AG04450 (cell line): ENCODE measurements at regions of chr17 and their contacts with region 1.

Region 1: DNA sequence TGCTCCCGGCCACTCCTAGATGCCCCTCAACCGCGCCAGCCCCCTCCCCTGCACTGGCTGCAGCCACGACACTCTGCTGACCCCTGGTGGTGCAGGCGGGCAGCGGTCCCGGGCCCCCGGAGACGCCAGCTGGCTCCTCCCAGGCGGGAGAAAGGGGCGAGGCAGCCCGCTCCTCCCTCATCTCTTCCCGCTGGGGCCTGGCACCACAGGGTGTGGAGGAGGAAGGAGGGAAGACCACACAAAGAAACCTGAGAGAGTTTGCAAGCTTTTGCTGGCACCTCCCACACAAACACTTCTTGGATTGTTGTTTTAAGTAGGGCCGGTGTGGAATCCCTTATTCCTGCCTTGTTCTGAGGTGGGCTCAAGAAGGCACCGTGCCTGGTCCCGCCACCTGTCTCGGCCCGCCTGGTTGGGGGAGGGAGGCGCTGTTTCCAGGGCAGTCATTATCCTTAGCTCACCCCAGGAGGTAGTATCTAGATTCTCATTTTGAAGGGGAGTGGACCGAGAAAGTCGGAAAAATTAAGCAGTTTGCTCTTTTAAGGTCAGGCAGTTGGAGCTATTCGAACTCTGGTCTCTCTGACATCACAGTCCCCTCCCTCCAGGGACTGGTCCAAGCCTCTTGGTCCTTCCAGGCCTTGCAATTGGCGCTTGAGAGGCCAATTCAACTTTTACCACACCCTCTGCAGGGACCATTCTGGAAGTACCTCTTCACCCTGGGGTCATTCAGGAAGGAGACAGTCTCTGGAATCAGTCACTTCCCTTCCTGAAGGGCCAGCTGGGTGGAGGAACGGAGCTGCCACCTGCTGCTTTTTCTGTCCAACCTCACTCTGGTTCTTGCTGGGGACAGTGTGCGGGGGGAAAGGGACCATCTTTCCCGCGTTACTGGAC is 951 bp upstream of the ANKRD13B start:
- DNase-seq: no peak
- H3K4me3 ChIP-seq: peak overlapping the region; percentile 44
- H3K27ac ChIP-seq: peak overlapping the region; percentile 65
- H3K27me3 ChIP-seq: no peaks in the 10 kb centered on the region
- CTCF ChIP-seq: peak; percentile 98

Region 2: GRCh38 chr17:29579866-29580771 is 11.9 kb before region 1 on chr17:
- CTCF ChIA-PET with region 1: interaction called, 23 read pairs
- POLR2A ChIA-PET with region 1: interaction called, 3 read pairs
- DNase-seq: no peak
- H3K4me3 ChIP-seq: no peak overlapping the region
- H3K27ac ChIP-seq: no peak overlapping the region
- H3K27me3 ChIP-seq: no peaks in the 10 kb centered on the region
- CTCF ChIP-seq: peak; percentile 79

Region 3: DNA sequence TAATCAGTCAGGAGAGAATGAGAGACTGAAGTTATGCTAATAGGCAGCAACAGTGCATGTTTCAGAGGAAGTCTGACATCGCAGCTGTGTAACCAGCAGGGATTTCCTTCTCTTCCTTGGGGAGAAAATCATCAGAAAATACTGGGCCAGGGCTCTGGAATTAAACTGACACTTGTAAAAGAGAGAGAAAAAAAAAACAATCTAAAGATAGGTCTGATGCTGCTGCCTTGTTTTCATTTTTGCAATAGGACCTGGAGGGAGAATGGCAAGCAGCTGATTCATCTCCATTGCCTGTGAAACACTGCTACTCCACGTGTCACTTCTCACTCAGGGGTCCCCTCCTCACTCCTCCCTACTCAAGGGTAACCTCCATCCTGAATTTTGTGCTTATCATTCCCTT is 48.4 kb after region 1 on chr17:
- CTCF ChIA-PET with region 1: no interaction called
- POLR2A ChIA-PET with region 1: no interaction called
- DNase-seq: peak; percentile 27
- H3K4me3 ChIP-seq: no peak overlapping the region
- H3K27ac ChIP-seq: peak overlapping the region; percentile 68
- H3K27me3 ChIP-seq: no peaks in the 10 kb centered on the region
- CTCF ChIP-seq: no peak